Naive thymus-derived CD4-positive, alpha-beta T cell (primary cell): ENCODE measurements at regions of chr21 and their contacts with region 1.

Region 1: GRCh38 chr21:31397515-31397926 is 53.5 kb upstream of the TIAM1 start:
- DNase-seq: no peak
- ATAC-seq: no peak
- H3K4me3 ChIP-seq: no peak overlapping the region
- H3K4me3 Mint-ChIP-seq: peak overlapping the region; percentile 40 to 84 (median 72)
- H3K27ac ChIP-seq: no peak overlapping the region
- H3K27ac Mint-ChIP-seq: peak overlapping the region; percentile 5 to 91 (median 61)
- H3K4me1 ChIP-seq: peaks cover 12 to 41% of the 10 kb centered on the region in 2 donors
- H3K4me1 Mint-ChIP-seq: peaks cover 20 to 77% (median 58%) of the 10 kb centered on the region in 7 donors
- H3K27me3 ChIP-seq: no peaks in the 10 kb centered on the region
- H3K27me3 Mint-ChIP-seq: no peaks in the 10 kb centered on the region

Region 2: GRCh38 chr21:30117631-30118030 is 1279.9 kb before region 1 on chr21:
- CTCF ChIA-PET with region 1: no interaction called
- POLR2A ChIA-PET with region 1: no interaction called
- intact Hi-C with region 1: no loop called
- DNase-seq: no peak
- ATAC-seq: no peak
- H3K4me3 ChIP-seq: no peak overlapping the region
- H3K4me3 Mint-ChIP-seq: no peak overlapping the region
- H3K27ac ChIP-seq: no peak overlapping the region
- H3K27ac Mint-ChIP-seq: no peak overlapping the region
- H3K4me1 ChIP-seq: no peaks in the 10 kb centered on the region
- H3K4me1 Mint-ChIP-seq: peaks cover 0 to 1% (median 0%) of the 10 kb centered on the region in 7 donors
- H3K27me3 ChIP-seq: no peaks in the 10 kb centered on the region
- H3K27me3 Mint-ChIP-seq: peaks cover 0 to 4% (median 0%) of the 10 kb centered on the region in 5 donors

Region 3: DNA sequence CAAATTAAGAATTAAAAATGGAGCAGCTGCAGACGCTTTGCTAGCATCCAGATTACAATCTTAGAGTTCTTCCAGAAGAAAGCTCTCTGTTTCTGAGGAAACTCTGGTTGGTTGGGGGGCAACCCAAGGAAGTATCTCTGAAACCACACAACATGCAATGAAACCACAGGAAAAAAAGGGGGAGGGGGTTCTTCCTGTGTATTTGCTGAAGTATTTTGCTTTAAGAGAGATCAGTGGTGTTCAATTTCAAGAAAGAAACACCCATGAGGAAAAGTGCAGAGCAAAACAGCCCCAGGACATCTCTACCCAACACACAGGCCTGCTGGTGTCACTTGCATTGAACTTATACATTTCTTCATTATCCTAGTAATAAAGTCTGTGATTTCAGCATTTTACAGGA is 33.8 kb before region 1 on chr21:
- CTCF ChIA-PET with region 1: no interaction called
- POLR2A ChIA-PET with region 1: interaction called, 3 read pairs
- intact Hi-C with region 1: loop called in 1 of 2 experiments (anchors 2 kb)
- DNase-seq: peak in 6 of 9 donors; percentile 33 to 57 (median 38)
- ATAC-seq: peak; percentile 24
- H3K4me3 ChIP-seq: no peak overlapping the region
- H3K4me3 Mint-ChIP-seq: peak overlapping the region; percentile 38 to 85 (median 68)
- H3K27ac ChIP-seq: no peak overlapping the region
- H3K27ac Mint-ChIP-seq: peak overlapping the region in 8 of 9 donors; percentile 2 to 85 (median 51)
- H3K4me1 ChIP-seq: peaks cover 10 to 17% of the 10 kb centered on the region in 2 donors
- H3K4me1 Mint-ChIP-seq: peaks cover 24 to 69% (median 37%) of the 10 kb centered on the region in 7 donors
- H3K27me3 ChIP-seq: no peaks in the 10 kb centered on the region
- H3K27me3 Mint-ChIP-seq: peaks cover 0 to 3% (median 0%) of the 10 kb centered on the region in 5 donors

Region 4: DNA sequence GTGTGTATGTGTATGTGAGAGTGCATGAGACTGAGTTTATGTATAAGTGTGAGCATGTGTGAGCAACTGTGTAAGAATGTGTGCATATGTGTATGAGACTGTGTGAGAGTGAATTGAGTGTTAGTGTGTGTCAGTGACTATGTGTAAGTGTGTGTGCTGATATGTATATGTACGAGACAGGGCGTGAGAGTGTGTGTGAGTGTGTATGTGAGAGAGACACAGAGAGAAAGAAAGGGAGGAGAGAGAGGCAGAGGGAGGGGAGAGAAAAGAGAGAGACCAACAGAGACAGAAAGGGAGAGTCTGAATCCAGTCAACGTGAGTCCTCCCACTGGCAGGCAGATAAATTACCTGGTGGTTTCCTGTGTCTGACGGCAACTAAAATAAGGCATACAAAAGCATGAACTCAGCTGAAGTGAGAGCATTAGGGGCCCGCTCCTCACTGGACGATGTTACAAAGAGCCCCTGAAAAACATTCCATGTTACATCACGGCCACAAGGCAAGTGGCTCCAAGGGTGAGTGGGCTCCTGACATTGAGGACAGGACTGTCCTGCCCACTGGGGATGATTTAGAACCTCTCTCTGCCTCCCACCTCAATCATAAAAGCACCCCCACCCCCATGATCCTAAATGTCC is 13.1 kb after region 1 on chr21:
- CTCF ChIA-PET with region 1: no interaction called
- POLR2A ChIA-PET with region 1: interaction called, 5 read pairs
- intact Hi-C with region 1: loop called in 1 of 2 experiments (anchors 1 kb)
- DNase-seq: peak in 6 of 9 donors; percentile 20 to 52 (median 38)
- ATAC-seq: peak; percentile 63
- H3K4me3 ChIP-seq: no peak overlapping the region
- H3K4me3 Mint-ChIP-seq: no peak overlapping the region
- H3K27ac ChIP-seq: no peak overlapping the region
- H3K27ac Mint-ChIP-seq: no peak overlapping the region
- H3K4me1 ChIP-seq: peaks cover 0 to 15% of the 10 kb centered on the region in 2 donors
- H3K4me1 Mint-ChIP-seq: peaks cover 2 to 23% (median 11%) of the 10 kb centered on the region in 7 donors
- H3K27me3 ChIP-seq: no peaks in the 10 kb centered on the region
- H3K27me3 Mint-ChIP-seq: no peaks in the 10 kb centered on the region

Region 5: GRCh38 chr21:31446226-31446855 is 48.8 kb after region 1 on chr21:
- CTCF ChIA-PET with region 1: no interaction called
- POLR2A ChIA-PET with region 1: no interaction called
- intact Hi-C with region 1: loop called (anchors 1 to 5 kb)
- DNase-seq: peak in 7 of 9 donors; percentile 12 to 66 (median 55)
- ATAC-seq: peak; percentile 86
- H3K4me3 ChIP-seq: peak overlapping the region; percentile 38
- H3K4me3 Mint-ChIP-seq: peak overlapping the region; percentile 38 to 86 (median 74)
- H3K27ac ChIP-seq: no peak overlapping the region
- H3K27ac Mint-ChIP-seq: peak overlapping the region; percentile 4 to 92 (median 33)
- H3K4me1 ChIP-seq: peaks cover 14 to 22% of the 10 kb centered on the region in 2 donors
- H3K4me1 Mint-ChIP-seq: peaks cover 26 to 58% (median 41%) of the 10 kb centered on the region in 7 donors
- H3K27me3 ChIP-seq: no peaks in the 10 kb centered on the region
- H3K27me3 Mint-ChIP-seq: peaks cover 0 to 7% (median 0%) of the 10 kb centered on the region in 5 donors

Region 6: DNA sequence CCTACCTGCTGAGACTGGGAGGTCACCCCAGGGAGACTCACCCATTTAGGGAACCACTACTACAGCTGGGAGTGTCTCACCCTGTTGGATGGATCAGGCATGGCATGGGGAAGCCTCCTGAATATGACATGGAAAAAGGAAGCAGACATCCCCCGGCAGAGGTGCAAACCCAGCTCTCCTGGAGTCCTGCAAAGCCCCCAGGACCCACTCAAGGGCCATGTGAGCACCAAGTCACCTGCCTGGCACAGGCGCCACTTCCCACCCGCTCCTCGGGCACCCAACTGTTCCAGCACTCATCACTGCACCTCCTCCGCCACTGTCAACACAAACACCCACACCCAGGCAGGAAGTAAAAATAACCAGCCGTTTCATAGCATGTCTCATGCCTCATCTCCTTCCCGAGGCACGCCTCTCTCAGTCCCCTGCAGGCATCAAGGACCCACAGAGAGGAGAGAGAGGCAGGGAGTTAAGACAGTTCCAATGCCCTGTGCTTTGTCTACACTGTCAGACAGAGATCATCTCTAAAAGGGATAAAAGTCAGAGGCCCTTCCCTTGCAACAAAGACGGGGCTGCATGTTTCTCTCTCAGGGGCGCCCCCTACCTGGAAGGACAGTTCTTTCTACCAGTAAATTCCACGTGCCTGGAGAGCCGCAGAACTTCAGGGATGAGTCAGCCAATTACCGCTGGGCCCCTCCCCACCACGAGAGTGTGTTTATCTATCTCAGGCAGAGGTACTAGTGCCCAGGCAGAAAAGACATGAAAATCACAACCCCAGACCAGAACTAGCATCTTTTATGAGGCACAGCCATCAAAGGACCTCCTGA is 111.9 kb after region 1 on chr21:
- CTCF ChIA-PET with region 1: no interaction called
- POLR2A ChIA-PET with region 1: no interaction called
- intact Hi-C with region 1: loop called (anchors 5 kb)
- DNase-seq: peak; percentile 24 to 81 (median 54)
- ATAC-seq: peak; percentile 66
- H3K4me3 ChIP-seq: no peak overlapping the region
- H3K4me3 Mint-ChIP-seq: peak overlapping the region in 8 of 10 donors; percentile 32 to 79 (median 60)
- H3K27ac ChIP-seq: no peak overlapping the region
- H3K27ac Mint-ChIP-seq: peak overlapping the region in 7 of 9 donors; percentile 7 to 83 (median 78)
- H3K4me1 ChIP-seq: peaks cover 6 to 16% of the 10 kb centered on the region in 2 donors
- H3K4me1 Mint-ChIP-seq: peaks cover 14 to 47% (median 34%) of the 10 kb centered on the region in 7 donors
- H3K27me3 ChIP-seq: no peaks in the 10 kb centered on the region
- H3K27me3 Mint-ChIP-seq: peaks cover 0 to 57% (median 0%) of the 10 kb centered on the region in 5 donors